Panc1 (cell line): ENCODE measurements at regions of chr15 and their contacts with region 1.

Region 1: GRCh38 chr15:78681281-78682003 is 40.4 kb upstream of the CHRNB4 start:
- DNase-seq: no peak
- ATAC-seq: no peak
- H3K4me3 ChIP-seq: no peak overlapping the region
- H3K27ac ChIP-seq: no peak overlapping the region
- H3K4me1 ChIP-seq: 0 out of 2 replicates have a peak, but pooled peaks cover 3% of the 10 kb centered on the region
- H3K27me3 ChIP-seq: no peaks in the 10 kb centered on the region
- CTCF ChIP-seq: no peak

Region 2: GRCh38 chr15:78695854-78696253 is 14.4 kb after region 1 on chr15:
- CTCF ChIA-PET with region 1: interaction called, 3 read pairs
- POLR2A ChIA-PET with region 1: no interaction called
- in situ Hi-C with region 1: no loop called
- intact Hi-C with region 1: loop called (anchors 1 kb)
- DNase-seq: no peak
- ATAC-seq: no peak
- H3K4me3 ChIP-seq: no peak overlapping the region
- H3K27ac ChIP-seq: no peak overlapping the region
- H3K4me1 ChIP-seq: no peaks in the 10 kb centered on the region
- H3K27me3 ChIP-seq: peaks cover 3% of the 10 kb centered on the region; the same call in 1 of the 2 replicates
- CTCF ChIP-seq: no peak

Region 3: DNA sequence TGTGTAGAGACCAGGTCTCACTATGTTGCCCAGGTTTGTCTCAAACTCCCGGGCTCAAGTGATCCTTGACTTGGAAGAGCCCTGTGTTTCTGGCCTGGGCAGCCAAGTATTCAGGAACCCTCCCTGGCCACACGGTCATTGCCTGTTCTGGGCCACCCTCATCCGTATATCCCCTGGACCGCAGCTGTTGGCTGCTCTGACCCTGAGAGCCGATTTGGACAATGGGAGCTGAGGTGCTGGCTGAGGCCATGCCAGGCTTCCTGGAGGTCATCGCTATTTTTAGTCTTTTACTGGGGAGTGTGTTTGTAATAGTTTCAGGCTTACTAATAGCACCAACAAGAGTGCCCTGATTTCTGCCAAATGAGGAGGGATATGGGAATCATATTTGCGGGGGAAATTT is 69.1 kb after region 1 on chr15:
- CTCF ChIA-PET with region 1: no interaction called
- POLR2A ChIA-PET with region 1: no interaction called
- in situ Hi-C with region 1: no loop called
- intact Hi-C with region 1: no loop called
- DNase-seq: no peak
- ATAC-seq: peak; percentile 19; the same call in 1 of the 2 replicates
- H3K4me3 ChIP-seq: peak overlapping the region; percentile 13 to 39; a peak in 3 of 4 replicates
- H3K27ac ChIP-seq: no peak overlapping the region
- H3K4me1 ChIP-seq: no peaks in the 10 kb centered on the region
- H3K27me3 ChIP-seq: no peaks in the 10 kb centered on the region
- CTCF ChIP-seq: no peak

Region 4: GRCh38 chr15:78804391-78804792 is 123.0 kb after region 1 on chr15:
- CTCF ChIA-PET with region 1: no interaction called
- POLR2A ChIA-PET with region 1: interaction called, 12 read pairs
- in situ Hi-C with region 1: no loop called
- intact Hi-C with region 1: no loop called
- DNase-seq: no peak
- ATAC-seq: no peak
- H3K4me3 ChIP-seq: no peak overlapping the region
- H3K27ac ChIP-seq: no peak overlapping the region
- H3K4me1 ChIP-seq: no peaks in the 10 kb centered on the region
- H3K27me3 ChIP-seq: no peaks in the 10 kb centered on the region; the same call in 1 of the 2 replicates
- CTCF ChIP-seq: no peak

Region 5: DNA sequence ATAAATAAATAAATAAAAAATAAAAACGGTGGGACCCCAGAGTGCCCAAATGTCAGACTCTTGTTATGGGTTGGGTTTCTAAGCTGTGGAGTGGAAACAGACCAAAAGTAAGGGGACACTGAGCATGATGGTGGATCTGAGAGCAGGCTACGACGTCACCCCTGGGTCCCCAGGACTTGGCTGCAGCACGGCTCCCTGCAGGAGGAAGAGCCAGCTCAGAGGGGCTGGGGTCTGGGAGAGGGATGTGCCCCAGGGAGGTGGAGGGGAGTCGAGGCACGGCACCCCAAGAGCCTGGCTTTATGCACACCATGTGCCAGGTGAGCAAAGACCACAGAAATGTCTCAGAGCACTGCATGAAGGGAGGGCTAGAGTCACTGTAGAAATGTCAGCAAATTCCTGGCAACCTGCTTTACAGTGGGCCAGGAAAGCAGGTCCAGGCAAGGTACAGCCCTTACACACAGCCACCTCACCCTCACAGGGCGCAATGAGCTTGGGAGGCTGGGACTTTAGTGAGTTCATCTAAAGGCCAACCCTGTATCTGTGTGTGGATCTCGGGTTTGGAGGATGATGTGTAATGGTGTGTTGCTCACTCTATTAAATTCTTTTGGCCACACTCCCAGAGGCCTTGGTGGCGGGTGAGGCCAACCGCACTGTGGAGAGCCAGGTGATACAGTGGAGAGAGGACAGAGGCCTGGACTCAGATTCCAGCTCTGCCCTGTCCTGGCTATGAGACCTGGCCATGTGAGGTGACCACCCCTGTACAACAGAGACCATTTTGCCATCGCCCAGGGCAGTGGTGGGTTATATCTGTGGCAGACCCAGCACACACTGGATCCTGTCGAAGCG is 249.3 kb after region 1 on chr15:
- CTCF ChIA-PET with region 1: no interaction called
- POLR2A ChIA-PET with region 1: no interaction called
- in situ Hi-C with region 1: no loop called
- intact Hi-C with region 1: no loop called
- DNase-seq: peak; percentile 85
- ATAC-seq: peak; percentile 87
- H3K4me3 ChIP-seq: no peak overlapping the region
- H3K27ac ChIP-seq: peak overlapping the region; percentile 97
- H3K4me1 ChIP-seq: peaks cover 81% of the 10 kb centered on the region
- H3K27me3 ChIP-seq: no peaks in the 10 kb centered on the region
- CTCF ChIP-seq: no peak